Psoas muscle (tissue), 8 donors: ENCODE measurements at regions of chr6 and their contacts with region 1.

Region 1: DNA sequence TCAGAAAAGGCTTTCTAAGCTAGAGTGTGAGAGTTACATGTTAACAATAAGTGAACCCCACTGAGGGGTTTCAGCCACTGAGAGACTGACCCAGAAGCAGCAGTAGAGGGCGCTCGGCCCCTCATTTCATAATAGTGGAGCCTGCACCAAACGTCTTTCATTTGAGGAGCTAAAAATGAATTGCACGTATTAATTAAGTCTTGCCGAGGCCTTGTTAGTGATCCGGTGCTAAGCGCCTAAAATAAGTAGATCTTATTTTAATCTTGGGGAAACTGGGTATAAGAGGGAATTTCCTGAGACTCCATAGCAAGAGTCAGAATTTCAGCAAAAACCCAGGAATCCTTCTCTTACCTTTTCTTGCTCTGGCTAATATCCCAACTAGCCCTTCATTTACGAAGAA is 209.7 kb downstream of the FARS2 start:
- DNase-seq: peak; percentile 42 to 67
- ATAC-seq: peak; percentile 53 to 92 (median 82)
- H3K4me3 ChIP-seq: no peak overlapping the region
- H3K27ac ChIP-seq: no peak overlapping the region
- H3K4me1 ChIP-seq: no peaks in the 10 kb centered on the region
- H3K27me3 ChIP-seq: no peaks in the 10 kb centered on the region
- CTCF ChIP-seq: peak; percentile 78

Region 2: GRCh38 chr6:5752391-5752680 is 281.3 kb after region 1 on chr6:
- intact Hi-C with region 1: loop called in 1 of 2 experiments (anchors 10 kb)
- DNase-seq: no peak
- ATAC-seq: peak; percentile 74 to 86 (median 80)
- H3K4me3 ChIP-seq: no peak overlapping the region
- H3K27ac ChIP-seq: peak overlapping the region; percentile 89
- H3K4me1 ChIP-seq: peaks cover 48% of the 10 kb centered on the region
- H3K27me3 ChIP-seq: no peaks in the 10 kb centered on the region
- CTCF ChIP-seq: no peak

Region 3: GRCh38 chr6:5764401-5764955 is 293.4 kb after region 1 on chr6:
- intact Hi-C with region 1: loop called (anchors 10 kb)
- DNase-seq: peak; percentile 50 to 79
- ATAC-seq: peak; percentile 93 to 94 (median 94)
- H3K4me3 ChIP-seq: peak overlapping the region; percentile 35
- H3K27ac ChIP-seq: peak overlapping the region; percentile 89
- H3K4me1 ChIP-seq: peaks cover 36% of the 10 kb centered on the region
- H3K27me3 ChIP-seq: no peaks in the 10 kb centered on the region
- CTCF ChIP-seq: no peak

Region 4: GRCh38 chr6:6003621-6004366 is 532.8 kb after region 1 on chr6:
- intact Hi-C with region 1: loop called in 1 of 2 experiments (anchors 5 kb)
- DNase-seq: peak in 1 of 2 donors; percentile 57
- ATAC-seq: peak in 2 of 4 donors; percentile 46 to 48
- H3K4me3 ChIP-seq: peak overlapping the region; percentile 65
- H3K27ac ChIP-seq: peak overlapping the region; percentile 60
- H3K4me1 ChIP-seq: peaks cover 27% of the 10 kb centered on the region
- H3K27me3 ChIP-seq: peaks cover 0 to 99% (median 65%) of the 10 kb centered on the region in 3 donors
- CTCF ChIP-seq: no peak